Naive thymus-derived CD4-positive, alpha-beta T cell (primary cell): ENCODE measurements at regions of chr18 and their contacts with region 1.

Region 1: DNA sequence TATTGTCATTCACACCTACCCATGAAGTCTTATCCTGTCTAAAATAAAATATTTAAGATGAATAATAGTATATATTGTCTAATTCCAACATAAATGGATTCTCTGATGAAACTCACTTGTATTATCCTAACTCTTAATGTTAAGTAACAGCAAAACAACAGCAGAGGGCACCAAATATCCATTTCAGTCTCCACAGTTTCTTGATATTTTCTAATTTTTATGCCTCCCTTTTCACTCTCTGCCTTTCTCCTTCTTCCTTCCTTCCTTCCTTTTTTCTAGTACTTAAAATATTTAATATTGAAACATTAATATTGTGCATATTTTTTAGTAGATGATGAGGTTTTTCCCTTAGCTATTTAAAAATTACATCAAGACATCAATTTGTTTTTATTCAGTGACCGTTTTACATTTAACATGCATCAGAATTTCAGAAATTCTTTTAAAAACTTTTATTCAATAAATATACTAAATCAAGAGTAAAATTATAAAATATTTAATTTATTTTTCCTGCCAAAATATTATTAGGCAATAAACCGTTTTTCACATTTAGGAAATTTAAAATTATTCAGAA is 97.6 kb downstream of the WDR7 start:
- DNase-seq: peak in 5 of 9 donors; percentile 5 to 31 (median 14)
- ATAC-seq: no peak
- H3K4me3 ChIP-seq: no peak overlapping the region
- H3K4me3 Mint-ChIP-seq: no peak overlapping the region
- H3K27ac ChIP-seq: no peak overlapping the region
- H3K27ac Mint-ChIP-seq: no peak overlapping the region
- H3K4me1 ChIP-seq: peaks cover 4 to 5% of the 10 kb centered on the region in 2 donors
- H3K4me1 Mint-ChIP-seq: peaks cover 15 to 24% (median 21%) of the 10 kb centered on the region in 7 donors
- H3K27me3 ChIP-seq: no peaks in the 10 kb centered on the region
- H3K27me3 Mint-ChIP-seq: no peaks in the 10 kb centered on the region

Region 2: DNA sequence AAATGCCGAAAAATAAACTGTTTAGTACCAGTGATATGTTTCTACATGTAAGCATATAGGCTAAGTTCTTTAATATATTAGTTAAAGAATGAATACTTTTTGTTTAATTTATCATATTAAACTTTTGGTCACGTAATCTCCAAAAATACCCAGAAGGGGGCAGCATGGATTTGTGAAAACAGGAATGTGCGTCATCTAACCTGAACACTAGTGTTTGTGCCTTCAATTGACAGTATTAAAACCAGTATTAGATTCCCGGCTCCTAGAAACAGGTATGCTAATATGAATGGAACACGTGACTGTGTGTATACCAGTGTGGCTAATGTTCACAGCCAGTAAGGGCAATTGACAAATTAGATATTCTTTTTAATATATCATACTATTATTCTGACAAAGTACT is 45.8 kb before region 1 on chr18:
- CTCF ChIA-PET with region 1: no interaction called
- POLR2A ChIA-PET with region 1: no interaction called
- intact Hi-C with region 1: no loop called
- DNase-seq: peak in 6 of 9 donors; percentile 7 to 27 (median 18)
- ATAC-seq: peak; percentile 56
- H3K4me3 ChIP-seq: no peak overlapping the region
- H3K4me3 Mint-ChIP-seq: no peak overlapping the region
- H3K27ac ChIP-seq: no peak overlapping the region
- H3K27ac Mint-ChIP-seq: no peak overlapping the region
- H3K4me1 ChIP-seq: no peaks in the 10 kb centered on the region
- H3K4me1 Mint-ChIP-seq: peaks cover 0 to 4% (median 1%) of the 10 kb centered on the region in 7 donors
- H3K27me3 ChIP-seq: no peaks in the 10 kb centered on the region
- H3K27me3 Mint-ChIP-seq: no peaks in the 10 kb centered on the region

Region 3: DNA sequence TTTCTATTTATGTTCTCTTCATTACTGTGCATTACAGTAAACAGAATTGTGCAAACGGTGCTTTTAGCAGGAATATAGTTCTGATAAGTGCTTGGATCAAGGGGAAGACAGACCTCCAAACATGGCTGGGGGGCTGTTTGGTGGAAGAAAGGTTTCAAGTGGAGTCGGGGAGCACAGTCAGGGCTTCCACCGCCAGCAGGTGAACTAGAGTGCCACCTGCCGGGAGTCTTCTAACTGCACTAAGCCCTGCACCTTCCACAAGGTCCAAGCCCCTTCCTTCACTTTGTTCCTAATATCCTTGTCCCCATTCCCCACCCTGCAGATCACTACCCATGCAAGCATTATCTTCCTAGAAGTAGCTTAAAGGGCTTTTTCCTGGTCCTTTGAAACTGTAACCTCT is 697.5 kb after region 1 on chr18:
- CTCF ChIA-PET with region 1: no interaction called
- POLR2A ChIA-PET with region 1: no interaction called
- intact Hi-C with region 1: loop called (anchors 1 to 2 kb)
- DNase-seq: no peak
- ATAC-seq: no peak
- H3K4me3 ChIP-seq: no peak overlapping the region
- H3K4me3 Mint-ChIP-seq: no peak overlapping the region
- H3K27ac ChIP-seq: no peak overlapping the region
- H3K27ac Mint-ChIP-seq: no peak overlapping the region
- H3K4me1 ChIP-seq: no peaks in the 10 kb centered on the region
- H3K4me1 Mint-ChIP-seq: peaks cover 3 to 5% (median 4%) of the 10 kb centered on the region in 7 donors
- H3K27me3 ChIP-seq: peaks cover 0 to 12% of the 10 kb centered on the region in 2 donors
- H3K27me3 Mint-ChIP-seq: peaks cover 48 to 78% (median 71%) of the 10 kb centered on the region in 5 donors